Activated CD4-positive, alpha-beta memory T cell treated with anti-CD3 and anti-CD28 coated beads for 36 hours (primary cell): ENCODE measurements at regions of chr9 and their contacts with region 1.

Region 1: GRCh38 chr9:34437006-34437925 is 21.1 kb downstream of the FAM219A start:
- DNase-seq: peak; percentile 70
- H3K4me3 Mint-ChIP-seq: no peak overlapping the region
- H3K27ac Mint-ChIP-seq: no peak overlapping the region
- H3K4me1 Mint-ChIP-seq: peaks cover 8% of the 10 kb centered on the region
- H3K27me3 Mint-ChIP-seq: no peaks in the 10 kb centered on the region

Region 2: GRCh38 chr9:34546834-34547827 is 109.9 kb after region 1 on chr9:
- CTCF ChIA-PET with region 1: interaction called, 6 read pairs
- POLR2A ChIA-PET with region 1: no interaction called
- intact Hi-C with region 1: loop called (anchors 2 kb)
- DNase-seq: peak; percentile 77
- H3K4me3 Mint-ChIP-seq: no peak overlapping the region
- H3K27ac Mint-ChIP-seq: no peak overlapping the region
- H3K4me1 Mint-ChIP-seq: no peaks in the 10 kb centered on the region
- H3K27me3 Mint-ChIP-seq: peaks cover 9% of the 10 kb centered on the region